OCI-LY7 (cell line): ENCODE measurements at regions of chr2 and their contacts with region 1.

Region 1: GRCh38 chr2:176126929-176127773 is 2.4 kb upstream of the HOXD8 start:
- DNase-seq: peak; percentile 66
- H3K4me3 ChIP-seq: no peak overlapping the region
- H3K27ac ChIP-seq: no peak overlapping the region
- H3K4me1 ChIP-seq: no peaks in the 10 kb centered on the region
- CTCF ChIP-seq: peak; percentile 99

Region 2: GRCh38 chr2:175823002-175823706 is 304.0 kb before region 1 on chr2:
- CTCF ChIA-PET with region 1: no interaction called
- POLR2A ChIA-PET with region 1: no interaction called
- intact Hi-C with region 1: no loop called
- DNase-seq: no peak
- H3K4me3 ChIP-seq: no peak overlapping the region
- H3K27ac ChIP-seq: no peak overlapping the region
- H3K4me1 ChIP-seq: no peaks in the 10 kb centered on the region
- CTCF ChIP-seq: no peak

Region 3: DNA sequence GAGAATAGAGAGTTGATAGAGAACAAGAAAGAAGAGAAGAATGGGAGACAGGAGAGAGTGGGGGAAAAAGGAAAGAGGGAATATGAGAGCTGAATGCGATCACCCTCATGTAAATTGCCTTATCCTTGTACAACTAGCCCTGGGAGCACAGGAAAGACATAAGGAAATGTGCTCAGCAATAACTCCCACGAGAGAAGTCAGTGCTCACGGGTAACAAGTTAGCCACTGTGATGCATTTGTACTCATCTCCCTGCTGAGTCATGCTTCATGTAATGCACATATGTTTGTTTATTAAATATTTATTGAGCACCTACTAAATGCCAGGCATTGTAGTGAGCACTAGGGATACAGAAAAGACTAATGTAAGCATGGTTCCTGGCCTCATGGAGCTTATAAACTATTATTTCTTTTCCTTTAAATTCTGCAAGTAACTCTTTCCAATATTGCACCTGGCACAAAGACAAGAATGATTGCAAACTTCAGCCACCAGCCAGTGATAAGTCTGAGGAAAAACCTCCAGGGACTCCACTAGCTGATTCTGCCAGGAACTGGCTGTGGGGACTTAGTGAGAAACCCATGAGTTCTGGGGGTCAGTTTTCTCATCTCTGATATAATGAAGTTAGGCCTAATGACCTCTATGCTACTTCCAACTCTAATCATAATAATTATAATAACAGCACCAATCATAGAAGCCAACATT is 249.2 kb before region 1 on chr2:
- CTCF ChIA-PET with region 1: no interaction called
- POLR2A ChIA-PET with region 1: no interaction called
- intact Hi-C with region 1: no loop called
- DNase-seq: no peak
- H3K4me3 ChIP-seq: no peak overlapping the region
- H3K27ac ChIP-seq: no peak overlapping the region
- H3K4me1 ChIP-seq: no peaks in the 10 kb centered on the region
- CTCF ChIP-seq: no peak

Region 4: DNA sequence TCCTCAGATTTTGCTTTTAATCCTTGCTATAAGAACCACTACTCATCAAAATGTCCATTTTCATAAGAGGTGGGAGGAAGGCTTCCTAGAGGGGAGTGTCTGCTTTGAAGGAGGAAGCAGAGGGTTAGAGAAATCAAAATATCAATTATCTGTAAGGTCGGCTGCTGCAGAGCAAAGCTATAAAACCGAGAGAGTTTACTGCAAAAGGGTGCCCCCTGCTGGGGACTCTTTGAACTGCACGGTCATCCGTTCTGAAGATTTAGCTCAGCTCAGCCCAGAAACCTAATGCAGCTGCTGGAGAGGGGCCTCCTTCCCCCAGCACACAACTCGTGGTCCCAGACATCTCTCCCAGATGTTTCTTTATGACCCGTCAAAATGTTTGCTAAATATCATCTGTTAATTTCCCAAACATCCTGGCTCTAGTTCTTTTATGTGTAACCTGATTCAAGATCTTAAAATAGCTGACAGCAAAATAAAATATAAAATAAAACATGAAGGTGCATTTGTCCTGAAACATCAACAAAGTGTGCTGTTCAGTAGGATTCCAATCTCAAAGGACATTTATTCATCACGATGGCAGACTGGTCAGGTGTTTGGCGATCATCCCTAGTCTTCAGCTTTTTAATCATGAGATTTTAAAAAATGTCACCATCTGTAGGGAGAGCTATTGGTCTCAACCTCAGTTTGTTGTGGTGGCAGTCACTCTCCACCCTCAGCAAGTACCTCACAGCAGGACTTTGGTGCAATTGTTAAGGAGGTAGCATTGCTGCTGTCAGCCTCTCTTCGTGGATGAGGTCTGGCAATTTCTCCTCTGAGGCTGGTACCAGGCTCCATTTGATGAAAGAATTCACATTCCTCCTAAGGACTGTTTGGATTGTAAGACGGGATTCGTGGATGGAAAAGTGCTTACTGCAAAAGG is 328.0 kb after region 1 on chr2:
- CTCF ChIA-PET with region 1: interaction called, 7 read pairs
- POLR2A ChIA-PET with region 1: interaction called, 8 read pairs
- intact Hi-C with region 1: loop called (anchors 2 kb)
- DNase-seq: peak; percentile 73
- H3K4me3 ChIP-seq: no peak overlapping the region
- H3K27ac ChIP-seq: no peak overlapping the region
- H3K4me1 ChIP-seq: no peaks in the 10 kb centered on the region
- CTCF ChIP-seq: peak; percentile 94

Region 5: GRCh38 chr2:176554101-176555048 is 427.2 kb after region 1 on chr2:
- CTCF ChIA-PET with region 1: no interaction called
- POLR2A ChIA-PET with region 1: interaction called, 7 read pairs
- intact Hi-C with region 1: loop called (anchors 5 kb)
- DNase-seq: peak; percentile 63
- H3K4me3 ChIP-seq: peak overlapping the region; percentile 52
- H3K27ac ChIP-seq: no peak overlapping the region
- H3K4me1 ChIP-seq: peaks cover 6% of the 10 kb centered on the region
- CTCF ChIP-seq: peak; percentile 96

Region 6: DNA sequence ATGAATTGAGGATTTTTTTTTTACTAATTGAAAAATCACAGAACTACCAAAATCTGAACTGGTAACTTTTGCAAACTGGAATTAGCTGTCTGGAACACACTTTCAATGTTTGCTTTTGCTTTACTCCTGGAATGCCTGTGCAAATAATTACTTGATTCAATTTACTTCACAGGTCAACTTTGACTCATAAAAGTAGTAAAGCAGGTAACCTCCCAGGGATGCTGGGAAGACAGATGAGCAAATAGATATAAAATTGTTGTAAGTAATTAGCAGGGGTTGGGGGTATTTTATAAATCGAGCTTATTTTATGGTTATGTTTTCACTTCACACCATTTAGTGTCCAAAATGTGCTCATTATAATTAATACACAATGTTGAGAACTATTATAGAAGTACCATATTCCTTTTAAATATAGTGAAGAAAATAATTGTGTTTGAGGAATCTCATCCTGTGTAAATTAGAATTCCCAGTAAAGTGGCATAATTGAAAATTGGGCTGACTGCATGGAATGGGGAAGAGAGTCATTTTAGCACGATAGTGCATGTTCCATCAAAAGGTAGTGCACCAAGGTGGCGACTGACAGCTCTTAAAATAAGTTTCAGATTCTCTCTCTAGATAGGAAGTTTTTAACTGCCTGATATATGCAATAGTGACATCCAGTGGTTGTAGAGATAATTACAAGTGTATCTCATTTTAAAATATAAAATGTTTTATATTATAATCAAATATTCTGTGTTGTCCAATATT is 687.3 kb after region 1 on chr2:
- CTCF ChIA-PET with region 1: no interaction called
- POLR2A ChIA-PET with region 1: no interaction called
- intact Hi-C with region 1: loop called (anchors 1 kb)
- DNase-seq: peak; percentile 78
- H3K4me3 ChIP-seq: no peak overlapping the region
- H3K27ac ChIP-seq: no peak overlapping the region
- H3K4me1 ChIP-seq: peaks cover 17% of the 10 kb centered on the region
- CTCF ChIP-seq: peak; percentile 89

Region 7: DNA sequence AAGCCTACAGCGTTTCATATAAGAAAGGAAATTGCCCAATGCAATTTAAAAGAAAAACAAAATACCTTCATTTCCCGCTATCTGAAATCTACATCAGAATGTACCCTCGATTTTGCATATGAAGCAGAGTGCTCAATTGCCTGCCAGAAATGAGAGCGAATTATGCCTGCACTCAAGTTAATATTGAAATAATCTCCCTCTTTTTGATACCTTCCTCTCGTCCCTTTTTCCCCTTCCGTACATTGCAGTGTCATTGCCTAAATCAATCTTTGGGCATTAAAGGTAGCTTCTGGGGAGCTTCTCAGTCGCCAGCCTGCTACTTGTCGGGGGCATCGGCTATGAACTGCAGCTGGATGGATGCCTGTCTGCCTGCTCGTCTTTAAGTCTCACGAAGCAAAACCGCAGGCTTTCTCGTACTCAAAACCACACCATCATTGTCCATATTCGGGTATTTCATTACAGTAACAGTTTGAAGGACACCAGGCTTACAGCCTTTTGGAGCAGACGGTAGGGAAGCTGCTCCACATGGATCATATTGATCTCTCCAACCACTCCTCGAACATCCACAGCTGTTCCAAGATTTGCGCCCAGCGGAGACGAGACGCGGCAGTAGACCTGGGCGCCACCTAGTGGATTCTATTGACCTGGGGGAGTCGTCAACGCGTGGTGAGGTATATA is 1021.5 kb after region 1 on chr2:
- CTCF ChIA-PET with region 1: no interaction called
- POLR2A ChIA-PET with region 1: no interaction called
- intact Hi-C with region 1: loop called (anchors 2 kb)
- DNase-seq: peak; percentile 75
- H3K4me3 ChIP-seq: peak overlapping the region; percentile 65
- H3K27ac ChIP-seq: no peak overlapping the region
- H3K4me1 ChIP-seq: peaks cover 9% of the 10 kb centered on the region
- CTCF ChIP-seq: peak; percentile 98